GM10248 (cell line): ENCODE measurements at regions of chr10 and their contacts with region 1.

Region 1: GRCh38 chr10:95374597-95375209 is 83.9 kb upstream of the PDLIM1 start:
- DNase-seq: peak; percentile 71
- CTCF ChIP-seq: peak; percentile 96

Region 2: GRCh38 chr10:95049919-95050318 is 324.8 kb before region 1 on chr10:
- CTCF ChIA-PET with region 1: no interaction called
- POLR2A ChIA-PET with region 1: no interaction called
- DNase-seq: no peak
- CTCF ChIP-seq: no peak

Region 3: GRCh38 chr10:95333997-95334804 is 40.5 kb before region 1 on chr10:
- CTCF ChIA-PET with region 1: no interaction called
- POLR2A ChIA-PET with region 1: no interaction called
- DNase-seq: no peak
- CTCF ChIP-seq: no peak

Region 4: GRCh38 chr10:95350219-95350829 is 24.4 kb before region 1 on chr10:
- CTCF ChIA-PET with region 1: interaction called, 13 read pairs
- POLR2A ChIA-PET with region 1: no interaction called
- DNase-seq: no peak
- CTCF ChIP-seq: no peak

Region 5: DNA sequence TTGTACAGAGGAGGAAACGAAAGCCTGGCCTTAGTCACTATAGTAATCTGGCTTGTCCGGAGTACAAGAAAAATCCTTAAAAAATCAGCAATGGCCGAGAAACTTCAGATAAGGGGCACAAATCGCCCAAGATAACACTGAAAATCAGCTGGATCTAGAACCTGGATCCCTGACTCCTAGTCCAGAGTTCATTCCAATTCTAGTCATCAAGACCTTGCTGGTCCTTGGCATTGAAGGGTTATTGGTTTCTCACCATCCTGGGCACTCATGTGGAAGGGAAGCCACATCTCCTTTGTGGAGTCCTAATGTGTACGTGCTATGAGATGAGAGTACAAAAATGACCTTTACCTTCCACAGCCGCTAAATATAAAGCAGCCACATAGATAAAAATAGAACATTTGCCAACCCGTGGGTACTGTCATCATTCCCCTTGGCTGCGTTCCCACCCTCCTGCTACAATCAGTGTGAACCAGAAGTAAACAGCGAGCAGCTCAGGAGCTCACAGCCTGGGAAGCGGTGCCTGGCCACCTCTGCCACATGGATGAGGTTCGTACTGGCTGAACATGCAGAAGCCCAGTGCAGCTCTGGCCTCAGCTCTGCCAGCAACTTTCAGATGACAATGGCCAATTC is 32.1 kb after region 1 on chr10:
- CTCF ChIA-PET with region 1: interaction called, 21 read pairs
- POLR2A ChIA-PET with region 1: no interaction called
- DNase-seq: no peak
- CTCF ChIP-seq: no peak

Region 6: GRCh38 chr10:95437669-95438068 is 63.0 kb after region 1 on chr10:
- CTCF ChIA-PET with region 1: interaction called, 67 read pairs
- POLR2A ChIA-PET with region 1: no interaction called
- DNase-seq: no peak
- CTCF ChIP-seq: no peak

Region 7: DNA sequence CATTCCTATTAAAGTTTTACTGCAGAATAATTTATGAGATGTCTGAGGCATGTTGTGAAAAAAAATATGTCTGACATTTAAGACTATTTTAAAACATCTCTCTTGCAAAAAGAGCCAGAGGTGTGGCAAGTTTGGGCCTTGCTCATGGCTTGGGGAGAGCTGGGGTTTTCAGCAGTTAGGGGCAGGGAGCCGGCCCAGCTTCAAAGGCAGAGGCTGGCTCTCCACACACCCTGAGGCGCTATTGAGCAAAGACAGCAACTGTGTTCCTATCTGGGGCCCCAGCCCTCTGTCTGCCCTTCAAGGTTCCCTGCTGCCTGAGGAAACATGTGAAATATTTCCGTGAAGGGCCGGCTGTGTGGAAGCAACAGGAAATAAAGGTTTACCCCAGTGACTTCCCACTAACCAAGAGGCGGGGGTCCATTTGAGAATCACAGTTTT is 92.5 kb after region 1 on chr10:
- CTCF ChIA-PET with region 1: no interaction called
- POLR2A ChIA-PET with region 1: no interaction called
- DNase-seq: no peak
- CTCF ChIP-seq: no peak

Region 8: DNA sequence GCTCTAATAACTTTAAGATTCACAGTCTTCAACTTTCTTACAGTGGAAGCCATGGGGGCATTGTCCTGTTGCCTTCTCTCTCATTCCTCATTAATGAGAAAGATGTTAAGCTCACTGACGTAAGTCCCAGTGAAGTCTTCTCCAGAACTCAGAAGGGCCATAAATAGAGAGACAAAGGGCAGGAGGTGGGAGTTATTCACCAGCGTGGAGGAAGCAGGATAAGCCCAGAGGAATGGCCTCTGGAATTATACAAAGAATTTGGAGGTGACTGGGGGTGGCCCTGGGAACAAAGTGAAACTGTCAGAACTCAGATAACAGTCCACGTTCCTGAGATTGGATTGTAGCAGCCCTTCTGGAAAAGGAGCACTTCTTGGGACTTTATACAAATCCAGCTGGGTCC is 134.0 kb after region 1 on chr10:
- CTCF ChIA-PET with region 1: no interaction called
- POLR2A ChIA-PET with region 1: no interaction called
- DNase-seq: no peak
- CTCF ChIP-seq: no peak

Region 9: GRCh38 chr10:95601116-95601719 is 226.5 kb after region 1 on chr10:
- CTCF ChIA-PET with region 1: interaction called, 170 read pairs
- POLR2A ChIA-PET with region 1: no interaction called
- DNase-seq: peak; percentile 67
- CTCF ChIP-seq: peak; percentile 87